PC-3 (cell line): ENCODE measurements at regions of chr14 and their contacts with region 1.

Region 1: GRCh38 chr14:64986578-64987571 is at the start of gene FNTB:
- DNase-seq: peak; percentile 98
- ATAC-seq: peak; percentile 97
- H3K4me3 ChIP-seq: peak within 1 kb of the TSS; percentile 78
- H3K27ac ChIP-seq: peak within 1 kb of the TSS; percentile 70
- H3K4me1 ChIP-seq: peaks cover 18% of the 10 kb centered on the region
- H3K27me3 ChIP-seq: no peaks in the 10 kb centered on the region
- CTCF ChIP-seq: peak; percentile 97
- total RNA-seq, gene FNTB: 19.5 and 28.1 TPM in 2 replicates

Region 2: GRCh38 chr14:64800000-64800399 is 186.9 kb before region 1 on chr14:
- CTCF ChIA-PET with region 1: no interaction called
- POLR2A ChIA-PET with region 1: no interaction called
- intact Hi-C with region 1: loop called (anchors 10 kb)
- DNase-seq: peak; percentile 69
- ATAC-seq: peak; percentile 55
- H3K4me3 ChIP-seq: no peak overlapping the region
- H3K27ac ChIP-seq: no peak overlapping the region
- H3K4me1 ChIP-seq: peaks cover 10% of the 10 kb centered on the region
- H3K27me3 ChIP-seq: no peaks in the 10 kb centered on the region
- CTCF ChIP-seq: peak; percentile 91

Region 3: DNA sequence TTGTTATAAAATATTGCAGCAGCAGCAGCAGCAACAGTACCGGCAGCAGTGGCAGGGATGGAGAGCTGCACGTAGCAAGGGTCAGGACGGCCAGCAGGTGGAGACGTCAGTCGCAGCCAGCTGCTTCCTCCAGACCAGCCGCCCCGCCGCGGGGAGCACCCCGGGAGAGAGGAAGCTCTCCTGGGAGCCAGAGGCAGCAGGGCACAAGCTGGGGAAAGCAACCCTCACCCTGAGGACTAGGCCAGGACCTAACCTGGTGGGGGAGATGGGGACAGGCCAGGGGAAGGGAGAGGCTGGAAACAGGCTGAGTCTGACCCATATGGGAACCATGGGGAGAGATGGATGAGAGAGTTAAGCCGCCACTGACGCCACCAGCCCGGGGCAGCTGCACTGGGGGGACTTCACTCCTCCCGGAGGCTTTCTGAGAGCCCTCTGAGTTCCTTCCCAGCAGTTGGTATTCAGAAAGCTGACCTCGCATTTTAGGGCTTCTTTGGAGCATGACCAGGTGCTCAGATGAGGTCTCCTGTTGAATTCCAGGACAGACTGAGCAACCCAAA is 163.5 kb before region 1 on chr14:
- CTCF ChIA-PET with region 1: no interaction called
- POLR2A ChIA-PET with region 1: no interaction called
- intact Hi-C with region 1: loop called (anchors 1 kb)
- DNase-seq: peak; percentile 83
- ATAC-seq: peak; percentile 99
- H3K4me3 ChIP-seq: peak overlapping the region; percentile 47
- H3K27ac ChIP-seq: no peak overlapping the region
- H3K4me1 ChIP-seq: no peaks in the 10 kb centered on the region; the same call in 1 of the 2 replicates
- H3K27me3 ChIP-seq: no peaks in the 10 kb centered on the region
- CTCF ChIP-seq: peak; percentile 90

Region 4: DNA sequence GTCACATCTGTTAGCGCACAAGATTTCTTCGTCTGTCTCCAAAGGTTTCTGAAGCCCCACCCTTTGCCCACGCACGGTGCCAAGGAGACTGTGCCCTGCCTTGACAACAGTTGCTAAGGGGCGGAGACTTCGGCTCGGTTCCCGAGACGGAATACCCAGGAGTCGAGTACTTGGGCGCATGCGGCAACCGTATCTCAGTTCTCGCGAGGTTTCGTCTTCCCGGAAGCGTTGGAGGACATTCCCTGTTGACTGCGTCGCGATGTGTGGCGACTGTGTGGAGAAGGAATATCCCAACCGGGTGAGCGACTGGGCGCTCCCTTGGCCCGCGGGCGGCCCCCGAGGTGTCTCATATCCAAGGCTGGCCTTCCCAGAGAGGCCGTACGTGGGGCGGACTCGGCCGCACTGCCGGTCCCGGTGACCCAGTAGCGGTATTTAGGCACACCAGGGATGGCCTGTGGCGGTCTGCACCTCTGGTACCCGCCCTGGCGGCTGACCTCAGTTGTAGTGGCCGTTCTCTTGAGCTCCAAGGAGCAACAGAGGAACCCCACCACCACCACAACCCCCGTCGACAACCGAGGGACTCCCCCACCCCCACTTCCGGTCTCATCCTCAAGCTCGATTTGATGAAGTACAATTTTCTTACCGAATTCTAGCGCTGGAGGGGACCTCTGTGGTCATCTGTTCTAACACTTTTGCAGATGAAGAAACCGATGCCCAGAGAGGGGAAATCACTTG is 72.5 kb before region 1 on chr14 and contains the start of gene CHURC1:
- CTCF ChIA-PET with region 1: interaction called, 3 read pairs
- POLR2A ChIA-PET with region 1: interaction called, 3 read pairs
- intact Hi-C with region 1: loop called (anchors 1 kb)
- DNase-seq: peak; percentile 100
- ATAC-seq: peak; percentile 99
- H3K4me3 ChIP-seq: peak within 1 kb of the TSS; percentile 85
- H3K27ac ChIP-seq: peak within 1 kb of the TSS; percentile 48
- H3K4me1 ChIP-seq: peaks cover 15% of the 10 kb centered on the region
- H3K27me3 ChIP-seq: no peaks in the 10 kb centered on the region
- CTCF ChIP-seq: no peak
- total RNA-seq, gene CHURC1: 44.0 and 50.3 TPM in 2 replicates

Region 5: DNA sequence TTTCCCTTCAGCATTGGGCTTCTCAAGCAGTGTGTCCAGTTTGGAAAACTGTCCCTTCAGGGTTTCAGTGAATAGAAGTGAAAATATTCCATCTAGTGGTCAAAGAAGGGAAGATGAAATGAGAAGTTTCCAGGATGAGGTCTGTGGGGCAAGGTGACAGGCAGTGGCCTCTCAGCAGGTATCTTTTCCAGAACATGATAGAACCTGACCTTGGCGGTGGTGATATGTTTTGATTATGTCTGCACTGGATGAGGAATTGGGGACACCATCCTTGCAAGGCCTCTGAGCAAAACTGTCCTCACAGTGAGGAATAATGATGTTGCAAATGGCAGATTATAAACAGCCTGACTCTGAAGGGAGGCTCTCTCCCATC is 49.1 kb before region 1 on chr14:
- CTCF ChIA-PET with region 1: interaction called, 4 read pairs
- POLR2A ChIA-PET with region 1: no interaction called
- intact Hi-C with region 1: loop called (anchors 1 kb)
- DNase-seq: peak; percentile 52
- ATAC-seq: peak; percentile 74
- H3K4me3 ChIP-seq: no peak overlapping the region
- H3K27ac ChIP-seq: no peak overlapping the region
- H3K4me1 ChIP-seq: peaks cover 5% of the 10 kb centered on the region; the same call in 1 of the 2 replicates
- H3K27me3 ChIP-seq: no peaks in the 10 kb centered on the region
- CTCF ChIP-seq: peak; percentile 66

Region 6: GRCh38 chr14:65019944-65020566 is 33.2 kb after region 1 on chr14:
- CTCF ChIA-PET with region 1: interaction called, 98 read pairs
- POLR2A ChIA-PET with region 1: interaction called, 5 read pairs
- intact Hi-C with region 1: loop called (anchors 1 kb)
- DNase-seq: peak; percentile 89
- ATAC-seq: peak; percentile 98
- H3K4me3 ChIP-seq: no peak overlapping the region
- H3K27ac ChIP-seq: no peak overlapping the region
- H3K4me1 ChIP-seq: no peaks in the 10 kb centered on the region; the same call in 1 of the 2 replicates
- H3K27me3 ChIP-seq: no peaks in the 10 kb centered on the region
- CTCF ChIP-seq: peak; percentile 96

Region 7: DNA sequence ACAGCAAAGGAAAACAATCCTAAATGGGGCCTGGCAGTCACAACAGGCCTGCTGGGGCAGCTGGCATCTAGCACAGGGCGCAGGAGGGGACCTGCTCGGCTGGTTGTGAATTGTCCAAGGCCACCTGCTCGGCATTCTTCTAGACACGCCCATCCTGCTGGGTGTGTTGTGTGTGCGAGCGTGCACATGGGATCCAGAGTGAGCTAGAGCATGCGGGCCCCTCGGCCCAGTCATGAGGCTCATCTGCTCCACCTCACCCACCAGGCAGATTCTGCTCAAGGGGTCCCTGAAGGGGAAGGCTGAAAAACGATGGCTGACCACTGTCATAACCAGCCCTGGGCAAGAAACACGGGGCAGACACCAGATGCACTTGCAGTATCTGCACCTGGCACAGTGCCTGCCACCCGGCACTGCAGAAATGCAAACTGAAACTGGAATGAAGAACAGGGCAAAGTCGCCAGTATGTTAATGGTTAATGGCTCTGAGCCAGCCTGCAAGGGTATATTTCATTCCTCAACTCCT is 83.6 kb after region 1 on chr14:
- CTCF ChIA-PET with region 1: no interaction called
- POLR2A ChIA-PET with region 1: no interaction called
- intact Hi-C with region 1: no loop called
- DNase-seq: peak; percentile 64
- ATAC-seq: peak; percentile 59
- H3K4me3 ChIP-seq: peak overlapping the region; percentile 56
- H3K27ac ChIP-seq: peak overlapping the region; percentile 42
- H3K4me1 ChIP-seq: peaks cover 12% of the 10 kb centered on the region
- H3K27me3 ChIP-seq: no peaks in the 10 kb centered on the region
- CTCF ChIP-seq: no peak

Region 8: DNA sequence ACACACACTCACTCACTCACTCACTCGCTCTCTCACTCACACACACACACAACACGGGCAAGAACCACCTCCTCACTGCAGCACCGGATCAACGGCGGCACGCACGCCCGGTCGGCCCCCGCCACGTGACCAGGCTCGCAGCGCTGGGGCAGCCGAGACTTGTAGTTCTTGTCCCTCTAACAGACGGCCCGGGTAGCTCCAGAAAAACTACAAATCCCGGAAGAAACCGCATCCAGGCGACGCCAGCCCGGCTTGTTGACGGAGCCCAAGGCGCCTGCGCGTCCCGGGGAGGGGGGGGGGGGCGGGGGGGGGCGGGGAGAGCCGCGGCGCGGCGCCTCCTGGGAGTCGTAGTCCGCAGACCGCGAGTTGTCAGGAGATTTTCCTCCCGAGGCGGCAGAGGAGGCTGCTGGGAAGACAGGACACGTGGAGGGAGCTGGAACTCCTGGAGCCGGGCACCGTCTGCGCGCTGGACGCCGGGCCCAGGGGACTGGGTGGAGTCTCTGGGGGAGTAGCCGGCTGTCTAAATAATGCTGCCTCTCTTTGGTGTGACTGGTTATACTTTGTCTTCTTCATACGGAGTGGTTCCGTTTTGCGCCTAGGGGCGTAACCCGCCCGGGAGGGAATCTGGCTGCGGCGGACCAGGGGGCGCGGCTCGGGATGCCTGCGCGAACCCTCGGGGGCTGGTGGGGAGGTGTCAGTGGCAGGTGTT is 115.7 kb after region 1 on chr14 and contains the start of gene MAX:
- CTCF ChIA-PET with region 1: no interaction called
- POLR2A ChIA-PET with region 1: no interaction called
- intact Hi-C with region 1: loop called (anchors 5 kb)
- DNase-seq: peak; percentile 98
- ATAC-seq: peak; percentile 90
- H3K4me3 ChIP-seq: peak within 1 kb of the TSS; percentile 89
- H3K27ac ChIP-seq: peak within 1 kb of the TSS; percentile 57
- H3K4me1 ChIP-seq: peaks cover 21% of the 10 kb centered on the region
- H3K27me3 ChIP-seq: no peaks in the 10 kb centered on the region
- CTCF ChIP-seq: no peak
- total RNA-seq, gene MAX: 58.8 and 68.9 TPM in 2 replicates

Region 9: DNA sequence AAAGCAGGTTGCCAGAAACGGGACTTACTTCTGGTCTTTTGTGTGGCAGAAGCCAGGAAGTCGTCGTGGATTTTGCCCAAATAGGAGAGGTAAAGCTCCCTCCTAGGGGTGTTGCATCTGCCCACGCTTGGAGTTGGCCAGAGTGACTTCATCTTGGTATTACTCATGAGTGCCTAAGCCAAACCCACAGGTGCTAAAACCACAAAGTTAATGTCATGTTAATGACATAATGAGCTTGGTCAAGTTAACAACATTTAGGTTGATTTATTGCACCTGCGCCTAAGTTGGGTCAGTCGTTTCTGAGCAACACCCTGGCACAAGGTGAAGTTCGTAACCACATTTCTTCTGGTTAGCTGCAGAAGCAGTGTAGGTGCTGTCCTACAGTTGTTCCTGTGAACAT is 650.9 kb after region 1 on chr14:
- CTCF ChIA-PET with region 1: no interaction called
- POLR2A ChIA-PET with region 1: no interaction called
- intact Hi-C with region 1: no loop called
- DNase-seq: no peak
- ATAC-seq: peak; percentile 49
- H3K4me3 ChIP-seq: no peak overlapping the region
- H3K27ac ChIP-seq: no peak overlapping the region
- H3K4me1 ChIP-seq: peaks cover 9% of the 10 kb centered on the region
- H3K27me3 ChIP-seq: no peaks in the 10 kb centered on the region
- CTCF ChIP-seq: no peak